Upper lobe of right lung (tissue), 1 donor: ENCODE measurements at regions of chr17 and their contacts with region 1.

Region 1: GRCh38 chr17:51765282-51766135 is 393.0 kb downstream of the CA10 start:
- DNase-seq: no peak
- ATAC-seq: no peak
- H3K4me3 ChIP-seq: no peak overlapping the region
- H3K27ac ChIP-seq: no peak overlapping the region
- H3K4me1 ChIP-seq: no peaks in the 10 kb centered on the region
- H3K27me3 ChIP-seq: no peaks in the 10 kb centered on the region
- CTCF ChIP-seq: no peak

Region 2: GRCh38 chr17:51617881-51618455 is 147.5 kb before region 1 on chr17:
- intact Hi-C with region 1: no loop called
- DNase-seq: no peak
- ATAC-seq: no peak
- H3K4me3 ChIP-seq: no peak overlapping the region
- H3K27ac ChIP-seq: no peak overlapping the region
- H3K4me1 ChIP-seq: no peaks in the 10 kb centered on the region
- H3K27me3 ChIP-seq: peaks cover 8% of the 10 kb centered on the region
- CTCF ChIP-seq: no peak

Region 3: DNA sequence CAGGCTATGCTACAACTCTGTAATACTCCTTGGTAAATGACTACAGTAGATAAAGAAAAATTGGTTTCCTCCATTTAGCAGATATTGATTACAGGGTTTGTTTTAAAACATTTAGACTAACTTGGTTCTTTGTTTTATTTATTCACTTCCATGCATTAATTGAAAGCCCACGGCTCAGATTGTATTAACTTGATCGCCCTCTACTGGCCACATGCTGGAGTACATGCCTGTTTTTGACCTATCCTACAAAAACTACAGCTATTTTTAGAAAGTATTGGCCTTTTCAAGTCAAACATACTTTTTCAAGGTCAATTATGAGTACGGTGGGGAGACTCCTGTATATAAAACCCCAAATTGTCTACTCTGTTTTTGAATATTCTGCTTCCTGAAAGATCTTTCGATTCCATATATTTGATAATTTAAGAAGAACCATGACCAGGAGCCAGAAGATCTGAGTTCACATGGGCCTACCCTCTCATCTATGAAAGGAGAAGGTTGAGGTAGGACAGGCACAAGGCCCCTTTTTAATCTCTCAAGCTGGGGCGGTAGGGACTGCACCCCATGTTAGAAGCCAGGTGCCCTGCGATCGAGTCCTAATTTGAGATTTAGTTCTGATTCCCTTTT is 341.2 kb after region 1 on chr17:
- intact Hi-C with region 1: loop called (anchors 5 kb)
- DNase-seq: no peak
- ATAC-seq: peak; percentile 54
- H3K4me3 ChIP-seq: no peak overlapping the region
- H3K27ac ChIP-seq: no peak overlapping the region
- H3K4me1 ChIP-seq: peaks cover 3% of the 10 kb centered on the region
- H3K27me3 ChIP-seq: peaks cover 7% of the 10 kb centered on the region
- CTCF ChIP-seq: peak; percentile 78